GM12878 (cell line): ENCODE measurements at regions of chr13 and their contacts with region 1.

Region 1: DNA sequence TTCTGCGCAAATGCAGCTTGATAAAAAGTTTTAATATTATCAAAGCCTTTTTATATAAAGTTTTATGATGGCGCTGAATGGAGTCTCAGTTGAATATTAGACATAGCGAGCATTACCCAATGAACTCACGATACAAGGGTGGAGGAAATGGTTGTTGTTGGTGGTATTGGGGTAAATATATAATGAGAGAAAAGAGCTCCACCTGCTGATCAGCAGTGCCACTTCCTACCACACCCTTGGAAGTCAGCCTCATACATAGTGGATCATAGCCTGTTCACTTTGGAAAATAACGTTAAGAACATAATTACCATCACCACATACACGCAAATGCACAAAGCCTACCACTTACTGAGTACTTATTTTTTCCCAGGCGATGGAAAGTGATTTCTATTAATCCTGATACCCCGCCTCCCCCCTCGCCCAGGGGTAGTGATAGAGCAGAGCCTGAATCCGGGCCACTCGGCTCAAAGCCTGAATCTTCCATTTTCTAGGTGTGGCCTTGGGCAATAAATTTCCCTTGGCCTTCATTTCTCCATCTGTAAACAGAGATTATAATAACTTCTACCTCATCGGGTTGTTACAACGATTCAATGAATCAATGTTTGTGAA is 358.3 kb downstream of the KLF5 start:
- DNase-seq: no peak
- ATAC-seq: peak; percentile 77
- H3K4me3 ChIP-seq: no peak overlapping the region
- H3K27ac ChIP-seq: no peak overlapping the region
- H3K4me1 ChIP-seq: no peaks in the 10 kb centered on the region
- H3K27me3 ChIP-seq: no peaks in the 10 kb centered on the region
- CTCF ChIP-seq: peak in 1 of 3 experiments; percentile 11; a peak in 2 of 6 replicates
- EP300 ChIP-seq: no peak
- POLR2A ChIP-seq: no peak
- RAD21 ChIP-seq: peak; percentile 18; the same call in 1 of the 2 replicates

Region 2: GRCh38 chr13:72839831-72840426 is 577.2 kb before region 1 on chr13:
- CTCF ChIA-PET with region 1: interaction called, 6 read pairs
- POLR2A ChIA-PET with region 1: no interaction called
- RAD21 ChIA-PET with region 1: interaction called, 3 read pairs
- SMC1A ChIA-PET with region 1: interaction called, 4 read pairs
- in situ Hi-C with region 1: no loop called
- intact Hi-C with region 1: loop called (anchors 2 kb)
- DNase-seq: peak; percentile 3
- ATAC-seq: peak; percentile 99
- H3K4me3 ChIP-seq: no peak overlapping the region
- H3K27ac ChIP-seq: no peak overlapping the region
- H3K4me1 ChIP-seq: no peaks in the 10 kb centered on the region
- H3K27me3 ChIP-seq: no peaks in the 10 kb centered on the region
- CTCF ChIP-seq: peak; percentile 77 to 78 (median 78)
- EP300 ChIP-seq: no peak
- POLR2A ChIP-seq: no peak
- RAD21 ChIP-seq: peak; percentile 92

Region 3: DNA sequence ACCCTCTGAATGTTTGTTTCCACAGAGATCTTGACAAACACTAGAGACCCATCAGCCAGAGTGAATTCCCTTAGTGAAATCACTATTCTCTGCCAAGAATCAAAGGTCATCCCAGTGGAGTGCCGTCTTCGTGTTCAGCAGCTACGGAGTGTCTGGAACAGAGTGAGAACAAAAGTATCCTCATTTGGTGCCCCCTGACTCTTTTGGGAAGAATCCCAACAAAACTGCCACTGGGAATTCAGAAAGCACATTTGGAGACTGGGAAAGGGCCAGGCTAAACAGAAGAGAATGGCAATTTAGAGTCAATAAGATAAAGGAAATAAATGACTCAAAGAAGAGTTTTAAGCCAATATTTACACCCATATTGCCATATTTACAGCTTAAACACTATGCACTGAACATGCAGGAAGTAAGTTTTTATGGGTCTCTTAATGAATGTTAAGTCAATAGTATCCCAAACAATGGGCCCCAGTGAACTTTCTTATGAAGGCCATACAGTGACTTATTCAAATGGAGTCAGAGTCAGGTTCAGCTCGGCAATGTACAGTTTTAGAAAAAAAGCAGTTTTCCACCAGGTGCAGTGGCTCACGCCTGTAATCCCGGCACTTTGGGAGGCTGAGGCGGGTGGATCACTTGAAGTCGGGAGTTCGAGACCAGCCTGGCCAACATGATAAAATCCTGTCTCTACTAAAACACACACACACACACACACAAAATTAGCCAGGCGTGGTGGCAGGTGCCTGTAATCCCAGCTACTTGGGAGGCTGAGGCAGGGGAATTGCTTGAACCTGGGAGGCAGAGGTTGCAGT is 34.3 kb after region 1 on chr13:
- CTCF ChIA-PET with region 1: no interaction called
- POLR2A ChIA-PET with region 1: no interaction called
- RAD21 ChIA-PET with region 1: no interaction called
- SMC1A ChIA-PET with region 1: no interaction called
- in situ Hi-C with region 1: no loop called
- intact Hi-C with region 1: no loop called
- DNase-seq: no peak
- ATAC-seq: no peak
- H3K4me3 ChIP-seq: no peak overlapping the region
- H3K27ac ChIP-seq: no peak overlapping the region
- H3K4me1 ChIP-seq: no peaks in the 10 kb centered on the region
- H3K27me3 ChIP-seq: no peaks in the 10 kb centered on the region
- CTCF ChIP-seq: no peak
- EP300 ChIP-seq: no peak
- POLR2A ChIP-seq: no peak
- RAD21 ChIP-seq: no peak

Region 4: DNA sequence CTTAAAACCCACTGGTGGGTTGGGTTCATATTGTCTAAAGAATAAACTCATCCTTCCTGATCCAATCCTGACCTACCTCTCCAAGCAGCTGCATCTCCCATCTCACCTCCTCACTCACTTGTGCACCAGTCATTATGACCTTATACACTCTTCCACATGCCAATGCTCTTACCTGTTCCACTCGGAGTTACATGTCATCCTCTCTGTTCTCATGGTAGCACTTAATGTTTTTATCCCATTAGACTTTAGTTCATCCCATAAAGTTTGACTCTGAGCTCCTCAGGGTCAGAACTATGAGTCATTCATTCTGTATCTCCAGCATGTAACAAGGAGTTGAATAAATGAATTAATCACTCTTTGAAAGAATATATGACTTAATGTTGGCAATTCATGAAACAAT is 386.9 kb after region 1 on chr13:
- CTCF ChIA-PET with region 1: no interaction called
- POLR2A ChIA-PET with region 1: no interaction called
- RAD21 ChIA-PET with region 1: no interaction called
- SMC1A ChIA-PET with region 1: no interaction called
- in situ Hi-C with region 1: no loop called
- intact Hi-C with region 1: no loop called
- DNase-seq: no peak
- ATAC-seq: no peak
- H3K4me3 ChIP-seq: no peak overlapping the region
- H3K27ac ChIP-seq: no peak overlapping the region
- H3K4me1 ChIP-seq: no peaks in the 10 kb centered on the region
- H3K27me3 ChIP-seq: no peaks in the 10 kb centered on the region
- CTCF ChIP-seq: no peak
- EP300 ChIP-seq: no peak
- POLR2A ChIP-seq: no peak
- RAD21 ChIP-seq: no peak